Mammary epithelial cell (primary cell): ENCODE measurements at regions of chr15 and their contacts with region 1.

Region 1: DNA sequence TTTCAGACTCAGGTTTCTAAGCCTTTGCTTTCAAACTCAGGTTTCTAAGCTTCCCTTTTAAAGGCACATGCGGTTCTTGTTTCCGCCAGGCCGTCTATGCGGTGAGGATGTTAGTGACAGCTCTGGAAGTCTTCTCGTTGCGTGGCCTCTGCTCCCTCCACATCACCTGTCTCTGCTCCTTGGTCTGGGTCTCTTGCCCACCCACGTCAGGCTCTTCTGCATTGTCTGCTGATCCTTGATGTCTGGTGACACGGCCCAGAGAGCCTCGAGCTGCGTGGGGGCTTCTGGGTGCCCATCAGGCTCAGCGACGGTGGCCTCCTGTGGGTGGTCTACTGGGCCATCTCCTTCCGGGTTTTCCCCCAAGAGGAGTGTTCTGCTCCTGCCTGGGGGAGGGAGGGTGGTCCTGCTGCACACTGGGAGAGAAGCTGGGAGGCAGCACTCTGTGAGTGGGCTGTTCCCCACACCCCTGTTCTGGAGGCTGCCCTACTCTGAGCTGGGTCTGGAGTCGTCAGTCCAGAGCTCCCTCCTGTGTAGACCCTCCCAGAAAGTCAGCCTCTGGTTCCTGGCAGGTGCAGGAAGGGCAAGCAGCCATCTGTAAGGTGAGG is 30.6 kb downstream of the KLF13 start:
- DNase-seq: no peak
- H3K4me3 ChIP-seq: no peak overlapping the region
- H3K27ac ChIP-seq: no peak overlapping the region
- H3K4me1 ChIP-seq: peaks cover 32% of the 10 kb centered on the region
- H3K27me3 ChIP-seq: no peaks in the 10 kb centered on the region
- CTCF ChIP-seq: no peak

Region 2: DNA sequence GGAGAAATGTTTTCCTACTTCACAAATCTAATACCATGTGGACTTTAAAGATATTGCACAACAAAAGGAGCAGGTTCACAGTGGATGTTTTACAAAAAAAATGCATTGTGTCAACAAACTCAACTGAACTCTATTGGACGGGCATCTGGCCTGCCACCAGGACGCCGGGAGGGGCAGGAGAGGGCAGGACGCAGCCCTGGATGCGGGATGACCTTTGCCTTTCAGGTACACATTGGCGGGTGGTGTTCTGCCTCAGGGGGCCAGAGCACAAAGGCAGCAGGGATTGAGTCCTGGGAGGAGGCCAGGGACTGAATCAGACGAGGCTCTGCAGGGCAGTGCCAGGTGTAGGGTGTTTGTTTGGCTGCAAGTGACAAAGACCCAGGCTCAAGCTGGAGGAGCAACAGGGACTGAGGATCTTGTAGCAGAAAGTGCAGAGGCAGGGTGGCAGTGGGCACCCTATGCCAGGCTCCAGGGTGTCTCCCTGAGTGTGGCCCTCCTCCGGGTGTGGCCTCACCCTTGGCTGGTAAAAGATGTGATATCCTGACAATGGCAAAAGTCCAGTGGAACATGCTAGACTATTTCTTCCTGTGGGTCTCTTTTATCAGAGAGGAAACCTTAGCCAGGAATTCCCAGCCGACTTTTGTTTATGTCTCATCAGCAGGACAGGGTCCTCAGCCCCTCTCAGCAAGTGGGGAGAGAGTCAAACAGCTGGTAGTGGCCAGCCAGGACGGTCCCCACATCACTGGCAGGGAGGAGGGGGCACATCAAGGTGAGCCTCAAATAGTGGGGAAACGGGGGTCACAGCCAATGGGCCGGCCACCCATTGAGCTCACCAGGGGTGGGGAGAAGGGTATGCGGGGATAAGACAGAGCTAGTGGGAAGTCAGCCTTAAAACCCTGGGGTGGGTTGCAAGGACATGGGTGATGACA is 60.3 kb before region 1 on chr15:
- CTCF ChIA-PET with region 1: no interaction called
- dilution Hi-C with region 1: no loop called
- in situ Hi-C with region 1: no loop called
- intact Hi-C with region 1: no loop called
- DNase-seq: peak; percentile 11
- H3K4me3 ChIP-seq: no peak overlapping the region
- H3K27ac ChIP-seq: no peak overlapping the region
- H3K4me1 ChIP-seq: no peaks in the 10 kb centered on the region
- H3K27me3 ChIP-seq: no peaks in the 10 kb centered on the region
- CTCF ChIP-seq: no peak

Region 3: GRCh38 chr15:31396881-31397560 is 39.8 kb after region 1 on chr15:
- CTCF ChIA-PET with region 1: no interaction called
- dilution Hi-C with region 1: loop called (anchors 5 kb)
- in situ Hi-C with region 1: no loop called
- intact Hi-C with region 1: no loop called
- DNase-seq: peak; percentile 89
- H3K4me3 ChIP-seq: no peak overlapping the region
- H3K27ac ChIP-seq: peak overlapping the region; percentile 67
- H3K4me1 ChIP-seq: peaks cover 43% of the 10 kb centered on the region
- H3K27me3 ChIP-seq: no peaks in the 10 kb centered on the region
- CTCF ChIP-seq: no peak

Region 4: DNA sequence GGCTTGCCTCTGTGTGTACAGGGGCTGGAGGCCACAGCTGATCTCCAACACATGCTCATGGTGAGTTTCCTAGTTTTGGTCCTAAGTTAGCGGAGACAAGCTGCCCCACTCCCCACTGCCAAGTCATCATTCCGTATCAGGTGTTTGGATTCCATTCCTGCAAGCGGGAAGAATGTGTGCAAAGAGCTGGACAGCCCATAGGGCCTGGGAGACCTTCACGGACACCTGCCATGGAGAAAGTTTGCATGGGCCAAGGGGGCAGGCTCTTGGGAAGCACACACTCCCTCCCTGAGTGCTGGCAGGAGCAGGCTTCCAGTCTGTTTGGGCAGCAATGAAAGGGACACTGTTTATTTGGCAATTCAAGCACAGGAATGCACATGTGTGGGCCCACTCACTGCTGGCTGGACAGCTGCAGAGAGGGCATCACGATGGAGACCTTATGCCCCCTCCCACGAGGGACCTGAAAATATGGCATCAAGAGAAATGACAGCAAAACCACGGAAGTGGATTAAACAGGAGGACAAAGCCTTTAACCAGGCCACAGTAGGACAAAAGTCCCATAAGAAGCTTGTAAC is 119.1 kb after region 1 on chr15:
- CTCF ChIA-PET with region 1: no interaction called
- dilution Hi-C with region 1: loop called (anchors 5 kb)
- in situ Hi-C with region 1: loop called in 1 of 2 experiments (anchors 10 kb)
- intact Hi-C with region 1: no loop called
- DNase-seq: no peak
- H3K4me3 ChIP-seq: no peak overlapping the region
- H3K27ac ChIP-seq: no peak overlapping the region
- H3K4me1 ChIP-seq: peaks cover 9% of the 10 kb centered on the region
- H3K27me3 ChIP-seq: no peaks in the 10 kb centered on the region
- CTCF ChIP-seq: no peak

Region 5: GRCh38 chr15:32844118-32844711 is 1487.0 kb after region 1 on chr15:
- CTCF ChIA-PET with region 1: no interaction called
- dilution Hi-C with region 1: no loop called
- in situ Hi-C with region 1: no loop called
- intact Hi-C with region 1: no loop called
- DNase-seq: peak; percentile 14
- H3K4me3 ChIP-seq: no peak overlapping the region
- H3K27ac ChIP-seq: no peak overlapping the region
- H3K4me1 ChIP-seq: no peaks in the 10 kb centered on the region
- H3K27me3 ChIP-seq: no peaks in the 10 kb centered on the region
- CTCF ChIP-seq: peak; percentile 63 to 76